MCF 10A (cell line): ENCODE measurements at regions of chr2 and their contacts with region 1.

Region 1: GRCh38 chr2:154720651-154721050 is 22.2 kb downstream of the KCNJ3 start:
- DNase-seq: no peak
- H3K4me3 Mint-ChIP-seq: no peak overlapping the region
- H3K27ac Mint-ChIP-seq: no peak overlapping the region
- H3K4me1 Mint-ChIP-seq: no peaks in the 10 kb centered on the region
- H3K27me3 Mint-ChIP-seq: peaks cover 59% of the 10 kb centered on the region
- CTCF ChIP-seq: no peak

Region 2: GRCh38 chr2:154677401-154677800 is 43.2 kb before region 1 on chr2:
- CTCF ChIA-PET with region 1: no interaction called
- POLR2A ChIA-PET with region 1: no interaction called
- intact Hi-C with region 1: loop called (anchors 5 kb)
- DNase-seq: no peak
- H3K4me3 Mint-ChIP-seq: no peak overlapping the region
- H3K27ac Mint-ChIP-seq: no peak overlapping the region
- H3K4me1 Mint-ChIP-seq: no peaks in the 10 kb centered on the region
- H3K27me3 Mint-ChIP-seq: peaks cover 66% of the 10 kb centered on the region
- CTCF ChIP-seq: no peak